Activated naive CD4-positive, alpha-beta T cell treated with anti-CD3 and anti-CD28 coated beads for 36 hours (primary cell): ENCODE measurements at regions of chr5 and their contacts with region 1.

Region 1: GRCh38 chr5:57327561-57328394 is 153.9 kb downstream of the GPBP1 start:
- DNase-seq: peak; percentile 6
- H3K4me3 Mint-ChIP-seq: no peak overlapping the region
- H3K27ac Mint-ChIP-seq: no peak overlapping the region
- H3K4me1 Mint-ChIP-seq: peaks cover 23% of the 10 kb centered on the region
- H3K27me3 Mint-ChIP-seq: no peaks in the 10 kb centered on the region

Region 2: DNA sequence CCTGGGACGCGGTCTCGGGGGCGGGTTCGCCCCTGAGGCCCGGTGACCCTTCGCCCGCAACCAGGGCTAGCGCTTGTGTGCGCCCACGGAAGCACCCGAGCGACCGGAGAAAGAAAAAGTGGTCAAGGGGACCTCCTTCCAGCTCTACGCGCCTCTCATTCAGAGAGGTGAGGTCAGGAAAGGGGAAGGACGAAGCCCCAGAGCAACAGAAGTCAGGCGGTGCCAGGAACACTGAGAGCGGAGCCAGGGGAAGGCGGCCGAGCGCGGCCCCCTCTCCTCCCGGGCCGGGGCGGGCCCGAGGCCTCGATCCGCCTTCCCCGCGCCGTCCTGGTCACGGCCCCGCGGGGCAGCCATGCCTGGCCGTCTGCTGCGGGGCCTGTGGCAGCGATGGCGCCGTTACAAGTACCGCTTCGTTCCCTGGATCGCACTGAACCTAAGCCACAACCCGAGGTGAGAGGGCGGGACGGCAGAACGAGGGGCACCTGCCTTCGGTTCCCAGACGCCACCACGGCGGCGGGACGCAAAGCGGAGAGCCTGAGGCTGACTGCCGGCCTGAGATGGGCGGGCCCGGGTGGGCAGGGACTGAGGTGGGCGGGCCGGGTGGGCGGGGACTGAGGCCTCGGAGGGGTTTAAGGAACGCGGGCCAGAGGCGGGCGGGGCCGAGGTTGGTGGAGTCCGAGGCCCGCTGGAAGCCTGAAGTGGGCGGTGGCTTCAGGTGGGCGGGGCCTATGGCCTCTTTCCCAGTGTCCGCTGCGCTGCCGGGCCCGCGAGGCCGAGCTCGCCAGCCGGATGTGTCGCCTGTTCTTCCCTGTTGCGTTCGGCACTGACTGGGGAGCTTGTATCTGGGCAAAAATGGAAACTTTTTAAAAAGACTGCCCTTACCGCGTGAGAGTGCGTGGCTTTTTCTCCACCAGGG is 418.2 kb before region 1 on chr5 and contains the start of gene SETD9:
- CTCF ChIA-PET with region 1: no interaction called
- intact Hi-C with region 1: loop called (anchors 1 kb)
- DNase-seq: peak; percentile 97
- H3K4me3 Mint-ChIP-seq: peak within 1 kb of the TSS; percentile 81
- H3K27ac Mint-ChIP-seq: peak within 1 kb of the TSS; percentile 94
- H3K4me1 Mint-ChIP-seq: peaks cover 19% of the 10 kb centered on the region
- H3K27me3 Mint-ChIP-seq: no peaks in the 10 kb centered on the region
- total RNA-seq, gene SETD9: 5.8 to 8.6 TPM

Region 3: DNA sequence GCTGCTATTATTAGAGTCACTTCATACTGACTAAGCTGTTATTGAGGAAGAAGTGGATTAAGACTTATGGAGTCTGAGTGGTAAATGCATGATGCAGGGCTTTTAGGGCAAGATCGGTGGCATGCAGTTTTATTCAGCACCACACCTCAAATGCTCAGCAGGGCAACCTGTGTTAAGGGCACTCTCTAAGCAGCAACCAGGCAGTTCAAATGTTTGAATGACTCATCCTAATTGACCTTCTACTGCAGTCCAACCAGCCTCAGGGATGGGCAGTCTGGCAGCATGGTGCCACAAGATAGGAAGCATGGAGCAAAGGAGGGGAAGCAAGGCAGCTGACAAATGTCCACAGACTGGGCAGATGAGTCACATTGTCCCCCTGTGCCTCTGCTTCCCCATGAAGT is 295.6 kb before region 1 on chr5:
- CTCF ChIA-PET with region 1: no interaction called
- intact Hi-C with region 1: no loop called
- DNase-seq: no peak
- H3K4me3 Mint-ChIP-seq: no peak overlapping the region
- H3K27ac Mint-ChIP-seq: no peak overlapping the region
- H3K4me1 Mint-ChIP-seq: peaks cover 10% of the 10 kb centered on the region
- H3K27me3 Mint-ChIP-seq: peaks cover 2% of the 10 kb centered on the region

Region 4: DNA sequence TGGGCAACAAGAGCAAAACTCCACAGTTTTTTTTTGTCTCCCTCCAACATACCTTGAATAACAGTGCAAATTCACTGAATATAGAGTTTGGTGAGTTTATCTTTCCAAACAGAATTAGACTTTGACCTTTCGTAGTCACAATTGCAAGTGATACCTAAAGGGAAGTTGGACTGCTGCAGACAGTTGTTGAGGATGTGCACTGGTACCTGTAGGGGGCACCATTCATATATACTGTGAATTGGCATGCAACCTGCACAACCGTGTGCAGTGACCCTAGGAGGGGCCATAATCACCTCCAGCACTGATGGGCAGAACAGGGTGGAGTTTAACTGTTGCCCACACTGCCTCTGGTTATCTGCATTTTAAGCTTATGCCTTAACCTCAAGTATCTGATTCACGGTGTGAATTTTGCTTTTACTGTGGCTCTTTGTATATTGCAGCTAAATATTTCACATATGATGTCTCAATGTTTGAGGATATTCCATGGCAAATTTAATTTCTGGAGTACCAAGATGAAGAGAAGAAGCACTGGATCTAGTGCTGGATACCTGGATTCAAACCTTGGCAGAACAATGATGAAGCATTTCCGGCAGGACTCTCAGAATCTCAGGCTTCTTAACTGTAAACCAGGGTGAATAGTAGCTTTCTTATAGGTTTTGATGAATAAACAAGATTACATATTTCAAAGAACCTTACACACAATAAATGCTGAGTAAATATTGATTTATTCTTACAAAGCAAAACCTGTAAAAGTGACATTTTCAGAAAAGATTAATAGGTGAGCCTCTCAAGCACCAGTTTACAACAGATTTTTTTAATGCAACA is 10.5 kb after region 1 on chr5:
- CTCF ChIA-PET with region 1: interaction called, 12 read pairs
- intact Hi-C with region 1: no loop called
- DNase-seq: peak; percentile 31
- H3K4me3 Mint-ChIP-seq: no peak overlapping the region
- H3K27ac Mint-ChIP-seq: no peak overlapping the region
- H3K4me1 Mint-ChIP-seq: no peaks in the 10 kb centered on the region
- H3K27me3 Mint-ChIP-seq: peaks cover under 1% of the 10 kb centered on the region

Region 5: GRCh38 chr5:57598756-57599155 is 271.0 kb after region 1 on chr5:
- CTCF ChIA-PET with region 1: no interaction called
- intact Hi-C with region 1: loop called (anchors 10 kb)
- DNase-seq: peak; percentile 55
- H3K4me3 Mint-ChIP-seq: no peak overlapping the region
- H3K27ac Mint-ChIP-seq: no peak overlapping the region
- H3K4me1 Mint-ChIP-seq: peaks cover 15% of the 10 kb centered on the region
- H3K27me3 Mint-ChIP-seq: peaks cover 18% of the 10 kb centered on the region